Aorta (tissue), 5 donors: ENCODE measurements at regions of chr13 and their contacts with region 1.

Region 1: GRCh38 chr13:93227878-93228642 is 1.5 kb downstream of the GPC6 start:
- DNase-seq: peak; percentile 61 to 88
- ATAC-seq: peak; percentile 91
- H3K4me3 ChIP-seq: peak overlapping the region; percentile 77 to 78
- H3K27ac ChIP-seq: peak overlapping the region in 1 of 2 donors; percentile 46
- H3K4me1 ChIP-seq: no peaks in the 10 kb centered on the region
- H3K27me3 ChIP-seq: no peaks in the 10 kb centered on the region

Region 2: DNA sequence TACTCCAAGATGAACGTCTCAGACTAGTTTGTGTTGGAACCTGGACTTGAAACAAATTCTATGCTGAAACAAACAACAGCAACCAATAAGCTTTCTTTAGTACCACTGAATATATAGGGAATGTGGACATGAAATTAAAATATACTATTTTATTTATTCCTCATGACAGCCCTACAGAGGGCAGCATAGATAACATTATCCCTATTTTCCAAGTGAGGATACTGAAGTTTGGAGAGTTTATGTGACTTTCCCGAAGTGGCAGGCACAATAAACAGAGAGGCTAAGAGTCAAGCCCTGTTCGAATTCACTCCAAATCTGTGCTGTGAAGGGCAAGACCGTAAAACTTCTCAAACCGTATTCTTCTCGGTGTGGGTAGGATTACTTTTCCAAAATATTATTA is 511.3 kb before region 1 on chr13:
- intact Hi-C with region 1: loop called in 1 of 2 experiments (anchors 10 kb)
- DNase-seq: no peak
- ATAC-seq: peak; percentile 41
- H3K4me3 ChIP-seq: no peak overlapping the region
- H3K27ac ChIP-seq: no peak overlapping the region
- H3K4me1 ChIP-seq: no peaks in the 10 kb centered on the region
- H3K27me3 ChIP-seq: no peaks in the 10 kb centered on the region

Region 3: DNA sequence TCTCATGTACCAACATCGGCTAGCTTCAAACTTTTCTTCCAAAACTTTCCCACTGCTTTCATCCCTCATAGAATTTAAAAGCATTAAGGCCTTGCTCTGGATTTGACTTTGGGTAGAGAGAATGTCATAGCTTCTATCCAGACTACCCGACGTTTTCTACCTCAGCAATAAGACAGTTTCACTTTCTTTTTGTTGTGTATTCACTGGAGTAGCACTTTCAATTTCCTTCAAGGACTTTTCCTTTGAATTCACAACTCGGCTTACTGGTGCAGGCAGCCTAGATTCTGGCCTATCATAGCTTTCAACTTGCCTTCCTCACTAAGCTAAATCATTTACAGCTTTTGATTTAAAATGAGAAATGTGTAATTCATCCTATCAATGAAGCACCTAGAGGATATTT is 421.8 kb before region 1 on chr13:
- intact Hi-C with region 1: loop called in 1 of 2 experiments (anchors 10 kb)
- DNase-seq: no peak
- ATAC-seq: peak; percentile 64
- H3K4me3 ChIP-seq: peak overlapping the region; percentile 26 to 34
- H3K27ac ChIP-seq: no peak overlapping the region
- H3K4me1 ChIP-seq: peaks cover 3 to 7% of the 10 kb centered on the region in 2 donors
- H3K27me3 ChIP-seq: no peaks in the 10 kb centered on the region

Region 4: DNA sequence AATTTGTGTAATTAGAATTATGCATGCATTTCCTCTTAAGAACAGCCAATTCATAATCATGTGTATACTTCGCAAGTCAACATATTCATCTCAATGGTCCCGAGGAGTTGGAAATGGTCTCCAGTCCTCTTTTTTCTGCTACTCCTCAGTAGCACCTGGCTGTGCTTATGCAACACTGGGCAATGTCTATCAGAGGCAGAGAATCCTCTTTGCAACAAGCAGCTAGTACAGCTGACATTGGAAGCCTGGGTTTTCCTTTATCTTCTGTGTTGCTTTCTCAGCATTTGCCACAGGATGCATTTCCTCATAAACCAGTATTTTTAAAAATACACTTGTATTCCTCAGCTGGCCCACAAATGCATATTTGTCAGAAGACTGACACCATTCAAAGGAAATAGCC is 406.7 kb before region 1 on chr13:
- intact Hi-C with region 1: loop called in 1 of 2 experiments (anchors 10 kb)
- DNase-seq: no peak
- ATAC-seq: no peak
- H3K4me3 ChIP-seq: no peak overlapping the region
- H3K27ac ChIP-seq: no peak overlapping the region
- H3K4me1 ChIP-seq: no peaks in the 10 kb centered on the region
- H3K27me3 ChIP-seq: peaks cover 0 to 1% of the 10 kb centered on the region in 2 donors